ENCODE measurements at regions of chr22 and their contacts with region 1.

Region 1: GRCh38 chr22:21624120-21624879 is 5.5 kb downstream of the YDJC start:
- DNase-seq: peak in 1 of 2 experiments; percentile 91
- H3K4me3 ChIP-seq: no peak overlapping the region
- H3K27ac ChIP-seq: no peak overlapping the region
- H3K4me1 ChIP-seq: peaks cover 0 to 3% (median 2%) of the 10 kb centered on the region in 4 experiments; a peak in 4 of 7 replicates
- H3K27me3 ChIP-seq: no peaks in the 10 kb centered on the region
- CTCF ChIP-seq: peak; percentile 66 to 86 (median 79)
- EP300 ChIP-seq: no peak
- POLR2A ChIP-seq: 0 out of 3 replicates have a peak, but pooled peaks of 1 of the 2 experiments have one; percentile 31
- RAD21 ChIP-seq: peak; percentile 37 to 47; a peak in 3 of 4 replicates

Region 2: DNA sequence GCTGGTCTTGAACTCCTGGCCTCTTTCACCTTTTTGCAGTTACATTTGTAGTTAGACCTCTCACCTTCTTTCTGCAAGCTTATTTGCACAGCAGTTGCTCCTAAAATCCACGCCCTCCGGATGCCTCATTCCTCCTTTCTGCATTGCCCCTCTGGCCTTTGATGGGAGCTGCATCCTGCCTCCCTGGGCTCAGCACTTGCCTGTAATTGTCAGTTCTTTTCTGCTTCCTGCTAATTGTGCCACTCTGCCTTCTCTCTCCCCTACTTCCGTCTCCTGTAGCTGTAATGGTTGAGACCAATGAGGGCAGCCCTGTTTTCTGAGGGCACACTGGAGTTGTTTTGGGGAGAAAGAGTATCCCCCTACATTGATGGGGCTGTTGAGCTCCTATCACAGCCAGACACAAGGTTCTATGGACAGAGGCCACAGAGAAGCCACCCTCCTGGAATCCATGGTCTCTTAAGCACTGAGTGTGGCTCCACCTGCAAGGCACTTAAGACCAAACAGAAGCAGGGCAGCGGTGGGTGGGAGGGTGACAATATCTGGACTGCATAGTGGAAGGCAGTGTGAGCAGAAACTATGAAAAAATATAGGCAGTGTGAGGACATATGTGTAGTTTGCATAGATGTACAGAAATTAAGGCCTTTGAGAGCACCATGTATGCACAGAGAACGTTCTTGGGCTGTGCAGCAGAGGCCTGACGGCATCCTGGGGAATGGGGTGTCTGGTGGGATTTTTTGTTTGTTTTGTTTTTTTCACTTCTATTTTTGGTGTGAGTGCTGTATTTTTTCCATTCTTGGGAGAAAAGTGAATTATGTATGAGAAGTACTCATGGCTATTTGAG is 25.0 kb before region 1 on chr22:
- CTCF ChIA-PET with region 1: interaction called, 15 read pairs
- POLR2A ChIA-PET with region 1: interaction called, 4 read pairs
- DNase-seq: no peak
- H3K4me3 ChIP-seq: no peak overlapping the region
- H3K27ac ChIP-seq: no peak overlapping the region
- H3K4me1 ChIP-seq: no peaks in the 10 kb centered on the region
- H3K27me3 ChIP-seq: no peaks in the 10 kb centered on the region
- CTCF ChIP-seq: no peak
- EP300 ChIP-seq: no peak
- POLR2A ChIP-seq: no peak
- RAD21 ChIP-seq: no peak

Region 3: DNA sequence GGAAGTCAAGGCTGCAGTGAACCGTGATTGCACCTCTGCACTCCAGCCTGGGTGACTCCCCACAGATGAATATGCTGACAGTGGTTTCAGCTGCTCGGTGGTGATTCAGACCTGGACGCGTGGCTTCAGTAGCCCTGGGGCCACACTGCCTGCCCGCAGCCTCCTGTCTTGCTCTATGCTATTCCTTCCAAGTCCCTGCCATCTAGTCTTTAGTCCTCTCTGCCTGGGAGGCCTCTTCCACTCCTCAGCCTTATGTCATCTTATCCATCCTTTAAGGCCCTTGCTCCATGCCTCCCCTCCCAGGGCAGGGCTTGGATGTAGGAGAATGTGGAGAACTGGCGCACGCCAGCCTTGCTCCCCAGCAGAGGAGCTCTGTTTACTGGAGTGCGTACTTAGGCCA is 17.5 kb before region 1 on chr22:
- CTCF ChIA-PET with region 1: interaction called, 20 read pairs
- POLR2A ChIA-PET with region 1: interaction called, 4 read pairs
- DNase-seq: no peak
- H3K4me3 ChIP-seq: no peak overlapping the region
- H3K27ac ChIP-seq: no peak overlapping the region
- H3K4me1 ChIP-seq: no peaks in the 10 kb centered on the region
- H3K27me3 ChIP-seq: no peaks in the 10 kb centered on the region
- CTCF ChIP-seq: no peak
- EP300 ChIP-seq: no peak
- POLR2A ChIP-seq: no peak
- RAD21 ChIP-seq: no peak

Region 4: GRCh38 chr22:21612865-21613265 is 11.4 kb before region 1 on chr22:
- CTCF ChIA-PET with region 1: interaction called, 33 read pairs
- POLR2A ChIA-PET with region 1: interaction called, 7 read pairs
- DNase-seq: no peak
- H3K4me3 ChIP-seq: no peak overlapping the region
- H3K27ac ChIP-seq: no peak overlapping the region
- H3K4me1 ChIP-seq: no peaks in the 10 kb centered on the region
- H3K27me3 ChIP-seq: no peaks in the 10 kb centered on the region
- CTCF ChIP-seq: no peak
- EP300 ChIP-seq: no peak
- POLR2A ChIP-seq: no peak
- RAD21 ChIP-seq: no peak

Measured in H1 (cell line).